Activated naive CD4-positive, alpha-beta T cell treated with anti-CD3 and anti-CD28 coated beads for 36 hours (primary cell): ENCODE measurements at regions of chr3 and their contacts with region 1.

Region 1: GRCh38 chr3:22960105-22960984 is 242.8 kb upstream of the UBE2E2 start:
- DNase-seq: peak; percentile 44
- H3K4me3 Mint-ChIP-seq: no peak overlapping the region
- H3K27ac Mint-ChIP-seq: no peak overlapping the region
- H3K4me1 Mint-ChIP-seq: peaks cover 7% of the 10 kb centered on the region
- H3K27me3 Mint-ChIP-seq: no peaks in the 10 kb centered on the region

Region 2: GRCh38 chr3:22089284-22089683 is 871.1 kb before region 1 on chr3:
- CTCF ChIA-PET with region 1: no interaction called
- intact Hi-C with region 1: loop called (anchors 2 kb)
- DNase-seq: peak; percentile 5
- H3K4me3 Mint-ChIP-seq: no peak overlapping the region
- H3K27ac Mint-ChIP-seq: no peak overlapping the region
- H3K4me1 Mint-ChIP-seq: no peaks in the 10 kb centered on the region
- H3K27me3 Mint-ChIP-seq: no peaks in the 10 kb centered on the region

Region 3: DNA sequence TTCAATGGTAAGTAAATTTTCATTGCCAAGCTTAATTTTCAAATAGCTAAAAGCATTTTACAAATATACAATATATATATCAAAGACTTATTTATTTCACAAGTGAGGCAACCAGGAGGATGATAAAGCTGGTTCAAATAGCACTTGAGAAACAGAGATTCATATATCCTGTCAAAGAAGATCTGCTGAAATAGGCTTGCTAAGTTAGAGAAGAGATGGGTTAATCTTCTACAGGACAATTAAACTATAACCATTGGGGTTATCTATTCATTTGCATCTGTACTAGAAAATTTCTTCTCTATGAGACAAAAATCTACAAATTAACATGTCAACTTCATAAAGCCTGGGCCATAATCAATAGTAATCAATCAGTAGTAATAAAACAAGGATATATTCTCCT is 395.0 kb before region 1 on chr3:
- CTCF ChIA-PET with region 1: interaction called, 7 read pairs
- intact Hi-C with region 1: loop called (anchors 1 kb)
- DNase-seq: no peak
- H3K4me3 Mint-ChIP-seq: no peak overlapping the region
- H3K27ac Mint-ChIP-seq: no peak overlapping the region
- H3K4me1 Mint-ChIP-seq: no peaks in the 10 kb centered on the region
- H3K27me3 Mint-ChIP-seq: no peaks in the 10 kb centered on the region

Region 4: DNA sequence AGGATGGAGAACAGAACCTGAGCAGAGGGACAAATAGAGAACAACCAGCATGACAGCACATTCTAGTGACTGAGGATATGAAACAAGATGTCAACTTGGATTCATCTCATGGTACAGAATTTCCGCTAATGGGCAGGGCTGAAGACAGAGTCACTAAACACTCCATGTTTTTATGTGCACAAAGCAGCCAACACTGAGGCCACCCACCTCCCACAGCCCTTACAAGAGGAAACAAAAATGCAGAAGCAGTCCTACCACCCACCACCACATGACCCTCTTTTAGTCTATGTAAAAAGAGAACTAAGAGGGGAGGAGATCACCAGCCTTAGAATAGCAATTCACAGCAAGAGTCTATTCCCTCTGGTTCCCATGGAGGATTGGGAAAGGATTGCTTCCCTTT is 111.4 kb after region 1 on chr3:
- CTCF ChIA-PET with region 1: no interaction called
- intact Hi-C with region 1: no loop called
- DNase-seq: no peak
- H3K4me3 Mint-ChIP-seq: no peak overlapping the region
- H3K27ac Mint-ChIP-seq: no peak overlapping the region
- H3K4me1 Mint-ChIP-seq: no peaks in the 10 kb centered on the region
- H3K27me3 Mint-ChIP-seq: no peaks in the 10 kb centered on the region